ENCODE measurements at regions of chr14 and their contacts with region 1.

Region 1: DNA sequence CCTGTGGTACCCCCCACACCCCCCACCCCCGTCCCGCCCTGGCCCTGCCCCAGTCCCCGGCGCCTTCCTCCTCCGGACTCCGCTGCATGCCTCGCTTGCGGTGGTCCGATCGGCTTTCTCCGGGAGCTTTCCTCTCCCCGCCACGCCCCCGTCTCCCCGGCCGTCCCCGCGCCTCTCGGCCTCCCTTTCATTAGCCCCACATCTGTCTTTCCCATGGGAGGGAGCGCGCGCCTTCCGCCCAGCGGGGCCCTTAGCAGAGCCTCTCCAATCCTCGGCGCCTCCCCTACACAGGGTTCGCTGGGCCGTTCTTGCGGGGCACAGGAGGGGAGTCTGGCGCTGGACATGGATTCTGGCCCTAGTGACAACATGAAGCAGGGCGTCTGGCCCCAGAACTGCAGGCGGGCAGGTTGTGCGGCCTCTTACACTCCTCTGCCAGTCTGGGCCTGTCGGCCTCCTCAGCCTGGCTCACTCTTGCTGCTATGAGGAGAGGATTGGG is 1.5 kb upstream of the EFS start:
- DNase-seq: peak; percentile 90
- H3K4me3 ChIP-seq: peak overlapping the region in 1 of 2 experiments; percentile 57; a peak in 2 of 4 replicates
- H3K27ac ChIP-seq: peak overlapping the region in 1 of 2 experiments; percentile 92; a peak in 2 of 4 replicates
- H3K4me1 ChIP-seq: peaks cover 0 to 16% of the 10 kb centered on the region in 2 experiments; a peak in 2 of 4 replicates
- H3K27me3 ChIP-seq: peaks cover 7% of the 10 kb centered on the region; the same call in 1 of the 2 replicates
- CTCF ChIP-seq: no peak
- EP300 ChIP-seq: no peak
- RAD21 ChIP-seq: no peak

Region 2: DNA sequence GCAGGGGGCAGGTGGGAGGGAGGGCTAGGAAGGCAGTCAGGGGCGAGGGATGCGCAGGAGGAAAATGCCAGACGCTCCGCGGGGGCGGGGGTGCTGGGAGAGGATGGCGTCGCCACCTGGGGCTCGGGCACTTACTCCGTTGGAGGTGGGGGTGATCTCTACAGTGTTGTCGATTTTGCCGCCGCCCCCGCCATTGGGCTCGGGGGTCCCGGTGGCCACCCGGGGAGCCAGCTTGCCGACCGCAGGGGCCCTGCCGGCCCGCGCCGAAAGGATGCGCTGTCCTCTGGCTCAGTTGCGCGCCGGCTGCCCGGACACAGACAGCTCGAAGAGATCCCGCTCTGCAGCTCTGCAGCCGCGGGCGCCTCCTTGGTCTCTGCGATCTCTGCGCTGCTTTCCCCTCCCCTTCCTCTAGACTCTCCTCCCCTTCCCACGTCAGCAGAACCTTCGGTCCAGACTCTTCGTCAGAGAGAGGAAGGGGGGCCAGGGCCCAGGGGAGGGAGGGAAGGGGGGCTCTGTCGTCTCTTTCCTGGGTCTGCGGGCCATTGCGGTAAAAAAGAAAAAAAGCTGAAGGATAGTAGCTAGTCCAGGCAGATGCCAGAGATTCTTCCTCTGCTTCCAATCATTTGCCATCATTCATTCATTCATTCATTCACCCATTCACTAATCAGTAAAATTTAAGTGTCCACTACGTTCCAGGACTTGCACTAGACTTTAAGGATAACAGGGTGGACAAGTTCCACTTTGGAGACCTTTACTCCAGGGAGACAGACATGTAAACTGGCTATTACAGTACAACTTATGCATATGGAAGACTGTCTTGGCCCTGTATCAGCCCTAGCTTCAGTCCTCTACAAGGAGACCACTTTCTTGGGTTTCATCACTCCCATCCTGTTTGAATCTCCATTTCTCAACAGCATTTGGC is 13.7 kb before region 1 on chr14 and contains the start of gene SLC22A17:
- CTCF ChIA-PET with region 1: interaction called, 13 read pairs
- POLR2A ChIA-PET with region 1: interaction called, 45 read pairs
- DNase-seq: peak; percentile 93
- H3K4me3 ChIP-seq: peak within 1 kb of the TSS; percentile 81 to 82
- H3K27ac ChIP-seq: peak within 1 kb of the TSS; percentile 55 to 92
- H3K4me1 ChIP-seq: peaks cover 0 to 12% of the 10 kb centered on the region in 2 experiments; a peak in 1 of 4 replicates
- H3K27me3 ChIP-seq: no peaks in the 10 kb centered on the region
- CTCF ChIP-seq: no peak
- EP300 ChIP-seq: no peak
- RAD21 ChIP-seq: no peak
- polyA plus RNA-seq, gene SLC22A17: 20.6 and 27.2 TPM in 2 replicates

Measured in SK-N-SH (cell line).